Dendritic cell treated with granulocyte-macrophage colony-stimulating factor and Interleukin-4, amounts not matched to agents 40 ng/mL and 50 ng/mL, for 4 days (primary cell): ENCODE measurements at regions of chr2 and their contacts with region 1.

Region 1: DNA sequence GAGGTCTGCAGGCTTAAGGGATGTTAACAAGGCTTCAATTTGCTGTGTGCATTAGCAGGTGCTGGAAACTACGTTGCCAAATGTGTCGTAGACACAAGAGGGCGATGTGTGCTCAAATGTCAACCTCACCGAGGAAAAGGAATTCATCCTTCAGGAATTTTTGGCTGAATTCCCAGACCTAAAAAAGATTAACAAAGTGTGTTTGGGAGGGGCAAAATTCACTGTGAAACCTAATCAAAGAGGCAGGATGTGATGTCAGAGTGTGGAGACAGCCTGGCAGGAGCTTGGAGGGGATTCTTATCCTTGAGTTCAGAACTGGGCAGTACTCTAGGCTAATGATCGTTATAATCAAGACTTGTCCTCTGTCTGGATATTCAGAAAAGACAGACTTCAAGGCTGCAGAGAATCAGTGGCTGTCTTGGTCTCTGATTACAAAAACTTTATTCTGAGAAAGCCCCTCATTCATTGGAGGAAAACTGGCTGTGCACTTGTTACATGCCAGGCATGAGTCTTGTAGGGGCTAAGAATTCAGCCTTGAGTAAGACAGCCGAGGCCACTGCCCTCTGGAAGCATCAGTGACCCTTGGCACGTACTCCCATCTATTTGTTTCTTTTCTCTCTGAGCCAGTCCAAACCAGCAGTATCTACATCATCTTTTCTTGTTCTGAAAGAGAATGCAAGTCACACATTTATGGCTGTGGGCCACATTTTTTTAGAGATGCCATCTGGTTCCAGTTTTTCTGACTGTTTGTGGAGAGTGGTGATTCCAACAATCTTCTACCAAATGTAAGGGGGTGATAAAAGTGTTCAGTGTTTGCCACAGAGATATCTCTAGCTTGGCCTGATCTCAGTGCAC is 18.7 kb upstream of the SCYGR1 start:
- H3K4me3 Mint-ChIP-seq: no peak overlapping the region
- H3K27ac Mint-ChIP-seq: peak overlapping the region; percentile 93
- H3K4me1 Mint-ChIP-seq: peaks cover 49% of the 10 kb centered on the region
- H3K27me3 Mint-ChIP-seq: peaks cover 3% of the 10 kb centered on the region

Region 2: GRCh38 chr2:227370791-227371312 is 35.6 kb before region 1 on chr2:
- intact Hi-C with region 1: loop called (anchors 2 kb)
- H3K4me3 Mint-ChIP-seq: peak overlapping the region; percentile 23
- H3K27ac Mint-ChIP-seq: peak overlapping the region; percentile 89
- H3K4me1 Mint-ChIP-seq: peaks cover 55% of the 10 kb centered on the region
- H3K27me3 Mint-ChIP-seq: no peaks in the 10 kb centered on the region

Region 3: GRCh38 chr2:227471924-227472264 is 65.5 kb after region 1 on chr2 and contains the start of gene AGFG1:
- intact Hi-C with region 1: loop called (anchors 5 kb)
- H3K4me3 Mint-ChIP-seq: peak within 1 kb of the TSS; percentile 76
- H3K27ac Mint-ChIP-seq: peak within 1 kb of the TSS; percentile 64
- H3K4me1 Mint-ChIP-seq: peaks cover 13% of the 10 kb centered on the region
- H3K27me3 Mint-ChIP-seq: no peaks in the 10 kb centered on the region